ENCODE measurements at regions of chr2 and their contacts with region 1.

Region 1: GRCh38 chr2:20106746-20107145 is 55.3 kb upstream of the LAPTM4A start:
- DNase-seq: peak; percentile 38
- H3K4me3 ChIP-seq: peak overlapping the region in 2 of 3 experiments; percentile 42 to 51
- H3K27ac ChIP-seq: no peak overlapping the region
- H3K4me1 ChIP-seq: peaks cover 22% of the 10 kb centered on the region
- H3K27me3 ChIP-seq: no peaks in the 10 kb centered on the region
- CTCF ChIP-seq: peak; percentile 30 to 78

Region 2: DNA sequence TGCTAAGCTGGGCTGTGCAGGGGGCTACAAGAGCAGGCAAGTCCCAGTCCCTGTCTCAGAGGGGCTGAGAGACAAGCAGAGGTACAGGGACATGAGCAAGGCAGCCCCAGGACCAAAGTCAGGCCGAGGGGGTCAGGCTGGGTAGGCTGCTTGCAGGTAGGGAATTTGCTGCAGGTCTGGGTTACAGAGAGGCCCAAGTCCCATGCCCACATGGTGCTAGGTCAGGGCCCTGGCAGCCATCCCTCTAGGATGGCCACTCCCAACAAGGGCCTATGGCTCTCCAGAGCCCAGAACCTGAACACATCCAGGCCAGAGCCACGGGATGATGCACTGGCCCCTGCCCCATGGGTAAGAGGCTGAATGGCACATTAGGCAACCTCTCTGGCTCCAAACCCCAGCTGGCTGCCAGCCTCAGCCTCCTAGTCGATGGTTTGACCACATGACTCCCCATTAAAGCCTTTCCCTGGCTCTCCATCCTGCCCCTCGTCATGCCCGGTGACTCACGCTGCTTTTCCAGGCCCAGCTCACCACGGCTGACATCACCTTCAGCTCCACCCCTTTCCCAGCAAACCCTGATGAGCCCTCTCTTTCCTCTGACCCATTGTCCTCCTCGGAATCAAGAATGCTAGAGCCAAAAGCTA is 34.5 kb after region 1 on chr2:
- CTCF ChIA-PET with region 1: no interaction called
- dilution Hi-C with region 1: no loop called
- in situ Hi-C with region 1: no loop called
- intact Hi-C with region 1: loop called (anchors 2 kb)
- DNase-seq: peak; percentile 95
- H3K4me3 ChIP-seq: no peak overlapping the region
- H3K27ac ChIP-seq: peak overlapping the region; percentile 47
- H3K4me1 ChIP-seq: peaks cover 58% of the 10 kb centered on the region
- H3K27me3 ChIP-seq: no peaks in the 10 kb centered on the region
- CTCF ChIP-seq: no peak

Region 3: DNA sequence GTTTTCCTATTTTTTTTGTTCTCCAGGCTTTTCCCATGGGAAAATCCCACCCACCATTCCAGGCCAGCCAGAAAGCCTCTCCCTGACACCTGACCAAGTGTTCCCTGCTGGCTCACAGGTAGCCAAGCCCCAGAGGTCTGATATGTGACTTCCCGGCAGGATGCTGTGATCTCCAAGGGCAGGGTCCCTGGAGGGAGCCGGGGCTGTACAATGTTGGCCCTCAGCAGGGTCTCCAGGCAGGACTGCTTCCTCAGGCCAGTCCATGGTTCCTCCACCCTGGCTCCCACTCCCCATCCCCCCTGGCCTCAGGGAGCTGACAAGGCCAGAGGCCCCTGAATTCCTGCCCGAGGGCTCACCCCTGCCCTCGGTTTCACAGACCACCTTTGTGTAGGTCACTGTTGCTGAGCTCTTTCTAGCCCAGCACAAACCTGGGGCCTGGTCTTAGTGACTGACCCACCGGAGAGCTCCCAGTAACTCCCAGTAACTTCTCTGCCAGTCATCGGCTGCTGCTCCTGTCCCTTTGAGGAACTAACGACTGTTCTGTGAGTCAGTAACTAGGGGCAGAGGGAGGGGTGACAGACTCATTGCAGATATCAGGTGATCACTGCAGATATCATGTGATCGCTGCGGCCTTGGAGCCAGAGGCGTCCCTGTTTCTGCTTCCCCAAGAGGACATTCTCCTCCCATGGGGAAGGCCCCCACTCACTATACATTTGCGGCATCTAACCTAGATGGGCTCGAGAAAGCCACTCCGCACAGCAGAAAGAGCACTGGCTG is 79.5 kb after region 1 on chr2:
- CTCF ChIA-PET with region 1: interaction called, 4 read pairs
- dilution Hi-C with region 1: loop called (anchors 5 kb)
- in situ Hi-C with region 1: loop called (anchors 5 kb)
- intact Hi-C with region 1: loop called (anchors 1 kb)
- DNase-seq: no peak
- H3K4me3 ChIP-seq: no peak overlapping the region
- H3K27ac ChIP-seq: no peak overlapping the region
- H3K4me1 ChIP-seq: peaks cover 42% of the 10 kb centered on the region
- H3K27me3 ChIP-seq: no peaks in the 10 kb centered on the region
- CTCF ChIP-seq: no peak

Region 4: GRCh38 chr2:20212459-20212870 is 105.7 kb after region 1 on chr2:
- CTCF ChIA-PET with region 1: interaction called, 4 read pairs
- dilution Hi-C with region 1: no loop called
- in situ Hi-C with region 1: loop called in 1 of 2 experiments (anchors 5 kb)
- intact Hi-C with region 1: loop called (anchors 1 kb)
- DNase-seq: peak; percentile 96
- H3K4me3 ChIP-seq: peak overlapping the region in 2 of 3 experiments; percentile 13 to 19
- H3K27ac ChIP-seq: peak overlapping the region; percentile 90
- H3K4me1 ChIP-seq: peaks cover 100% of the 10 kb centered on the region
- H3K27me3 ChIP-seq: no peaks in the 10 kb centered on the region
- CTCF ChIP-seq: no peak

Region 5: DNA sequence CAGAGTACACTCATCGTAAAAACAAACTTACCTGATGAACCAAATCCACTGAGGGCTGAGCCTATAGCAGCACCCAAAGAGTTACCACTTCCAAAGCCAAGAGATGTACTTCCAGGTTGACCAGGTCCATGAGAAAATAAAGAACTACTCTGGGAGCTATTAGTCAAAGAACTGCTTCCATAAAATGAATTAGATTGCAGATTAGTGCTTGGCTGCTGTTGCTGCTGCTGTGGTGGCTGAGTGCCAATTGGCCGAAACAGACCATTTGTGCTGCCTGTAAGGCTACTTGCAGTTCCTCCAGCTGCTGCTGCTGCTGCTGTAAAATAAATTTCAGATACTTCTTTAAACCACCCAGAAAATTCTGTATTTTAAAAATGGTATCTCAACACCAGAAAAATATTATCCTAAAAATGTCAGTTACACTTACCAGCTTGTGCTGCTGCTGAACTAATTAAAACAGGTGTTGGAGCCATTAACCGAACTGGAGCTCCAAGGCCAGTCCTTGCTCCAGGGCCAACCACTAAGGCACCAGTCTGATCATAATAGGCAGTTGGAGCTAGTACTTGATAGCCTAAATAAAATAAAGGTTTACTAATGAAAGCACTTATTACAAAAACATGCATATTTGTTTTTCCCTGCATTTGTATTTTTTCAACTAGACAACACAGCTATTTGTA is 176.3 kb after region 1 on chr2:
- CTCF ChIA-PET with region 1: no interaction called
- dilution Hi-C with region 1: no loop called
- in situ Hi-C with region 1: loop called in 1 of 2 experiments (anchors 10 kb)
- intact Hi-C with region 1: no loop called
- DNase-seq: no peak
- H3K4me3 ChIP-seq: no peak overlapping the region
- H3K27ac ChIP-seq: no peak overlapping the region
- H3K4me1 ChIP-seq: no peaks in the 10 kb centered on the region
- H3K27me3 ChIP-seq: no peaks in the 10 kb centered on the region
- CTCF ChIP-seq: no peak

Region 6: DNA sequence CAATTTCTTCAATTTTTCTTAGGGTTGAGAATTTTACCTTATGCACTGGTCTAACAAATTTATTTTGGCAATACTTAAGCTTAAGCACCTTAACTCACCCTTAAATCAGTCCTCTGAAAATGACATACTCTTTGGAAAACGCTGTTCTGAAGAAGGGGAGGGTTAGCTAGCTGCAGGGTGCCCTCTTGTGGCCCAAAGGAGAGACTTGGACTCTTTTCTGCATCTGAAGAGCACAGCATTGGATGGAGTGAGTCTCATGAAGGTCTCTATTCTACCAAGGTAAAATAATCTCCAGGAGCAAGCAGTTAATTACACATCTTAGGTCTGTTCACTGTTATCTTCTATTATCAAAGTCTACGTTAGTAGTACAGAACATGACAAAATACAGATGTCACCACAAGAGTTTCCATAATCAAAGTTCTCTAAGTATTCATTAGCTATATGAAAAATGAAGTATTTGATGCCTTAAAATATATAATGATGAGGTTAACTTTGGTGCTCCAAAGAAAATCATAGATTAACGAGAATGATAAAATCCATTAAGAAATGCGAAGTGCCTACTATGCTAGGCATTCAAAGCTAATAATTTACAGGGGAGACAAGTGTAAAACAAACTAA is 219.5 kb after region 1 on chr2:
- CTCF ChIA-PET with region 1: no interaction called
- dilution Hi-C with region 1: no loop called
- in situ Hi-C with region 1: no loop called
- intact Hi-C with region 1: loop called (anchors 2 kb)
- DNase-seq: peak; percentile 46
- H3K4me3 ChIP-seq: no peak overlapping the region
- H3K27ac ChIP-seq: no peak overlapping the region
- H3K4me1 ChIP-seq: peaks cover 4% of the 10 kb centered on the region
- H3K27me3 ChIP-seq: no peaks in the 10 kb centered on the region
- CTCF ChIP-seq: peak; percentile 89 to 91

Measured in mammary epithelial cell (primary cell).